AG04449 (cell line): ENCODE measurements at regions of chr15 and their contacts with region 1.

Region 1: DNA sequence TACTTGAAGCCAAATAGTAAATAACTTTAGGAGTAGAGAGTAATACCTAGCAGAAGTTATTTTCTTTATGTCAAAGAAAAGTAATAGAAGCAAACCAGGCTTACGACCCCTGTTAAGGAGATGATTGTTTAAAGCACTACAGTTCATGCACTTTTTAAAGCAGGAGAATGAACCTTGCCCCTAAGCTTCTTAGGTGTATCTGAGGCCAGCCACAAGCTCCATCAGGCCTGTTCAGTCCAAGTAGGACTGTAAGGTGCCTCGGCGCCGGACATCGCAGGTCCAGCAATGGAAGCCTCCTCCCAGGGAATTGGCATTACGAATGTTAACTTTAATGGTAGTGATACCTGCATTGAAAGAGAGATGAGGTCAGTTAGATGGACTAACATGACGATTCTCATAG is 16.5 kb downstream of the GATM start:
- DNase-seq: no peak
- H3K4me3 ChIP-seq: no peak overlapping the region
- CTCF ChIP-seq: no peak

Region 2: GRCh38 chr15:45378149-45378912 is 16.5 kb after region 1 on chr15 and contains the start of gene GATM:
- CTCF ChIA-PET with region 1: interaction called, 11 read pairs
- POLR2A ChIA-PET with region 1: no interaction called
- DNase-seq: no peak
- H3K4me3 ChIP-seq: peak within 1 kb of the TSS; percentile 48
- CTCF ChIP-seq: peak; percentile 71

Region 3: DNA sequence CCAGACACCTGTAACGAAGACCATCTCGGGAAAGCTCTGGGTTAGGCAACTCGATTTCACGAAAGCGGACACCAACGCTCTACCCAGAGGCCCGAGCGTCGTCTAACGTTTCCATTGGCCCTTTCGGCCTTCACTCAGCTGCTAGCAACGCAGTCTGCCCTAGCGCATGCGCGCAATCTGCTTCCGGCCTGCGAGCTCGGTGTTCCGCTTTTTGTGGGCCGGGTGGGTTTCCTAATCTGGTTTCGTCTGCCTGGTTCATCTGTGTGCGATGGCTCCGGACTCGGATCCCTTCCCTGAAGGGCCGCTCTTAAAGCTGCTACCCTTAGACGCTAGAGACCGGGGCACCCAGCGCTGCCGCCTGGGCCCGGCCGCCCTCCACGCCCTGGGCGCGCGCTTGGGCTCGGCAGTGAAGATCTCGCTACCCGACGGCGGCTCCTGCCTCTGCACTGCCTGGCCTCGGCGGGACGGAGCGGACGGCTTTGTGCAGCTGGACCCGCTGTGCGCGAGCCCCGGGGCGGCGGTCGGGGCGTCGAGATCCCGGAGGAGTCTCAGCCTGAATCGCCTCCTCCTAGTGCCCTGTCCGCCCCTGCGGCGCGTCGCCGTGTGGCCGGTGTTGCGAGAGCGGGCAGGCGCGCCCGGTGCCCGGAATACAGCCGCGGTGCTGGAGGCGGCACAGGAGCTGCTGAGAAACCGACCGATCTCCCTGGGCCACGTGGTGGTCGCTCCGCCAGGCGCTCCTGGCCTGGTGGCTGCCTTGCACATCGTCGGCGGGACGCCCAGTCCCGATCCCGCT is 40.5 kb after region 1 on chr15:
- CTCF ChIA-PET with region 1: no interaction called
- POLR2A ChIA-PET with region 1: no interaction called
- DNase-seq: peak; percentile 93
- H3K4me3 ChIP-seq: peak overlapping the region; percentile 82
- CTCF ChIP-seq: no peak

Region 4: GRCh38 chr15:45522328-45523160 is 160.7 kb after region 1 on chr15 and contains the start of gene SLC30A4:
- CTCF ChIA-PET with region 1: no interaction called
- POLR2A ChIA-PET with region 1: no interaction called
- DNase-seq: no peak
- H3K4me3 ChIP-seq: peak within 1 kb of the TSS; percentile 67
- CTCF ChIP-seq: peak; percentile 30